CD8-positive, alpha-beta T cell (primary cell): ENCODE measurements at regions of chr1 and their contacts with region 1.

Region 1: GRCh38 chr1:89578151-89578550 is 53.5 kb downstream of the LRRC8B start:
- DNase-seq: no peak
- ATAC-seq: no peak
- H3K4me3 ChIP-seq: no peak overlapping the region
- H3K4me3 Mint-ChIP-seq: no peak overlapping the region
- H3K27ac ChIP-seq: no peak overlapping the region
- H3K27ac Mint-ChIP-seq: no peak overlapping the region
- H3K4me1 ChIP-seq: no peaks in the 10 kb centered on the region
- H3K4me1 Mint-ChIP-seq: peaks cover 7% of the 10 kb centered on the region
- H3K27me3 ChIP-seq: no peaks in the 10 kb centered on the region
- H3K27me3 Mint-ChIP-seq: no peaks in the 10 kb centered on the region
- CTCF ChIP-seq: no peak

Region 2: GRCh38 chr1:89538361-89538760 is 39.8 kb before region 1 on chr1:
- CTCF ChIA-PET with region 1: interaction called, 4 read pairs
- POLR2A ChIA-PET with region 1: no interaction called
- intact Hi-C with region 1: loop called in 1 of 2 experiments (anchors 5 kb)
- DNase-seq: no peak
- ATAC-seq: no peak
- H3K4me3 ChIP-seq: no peak overlapping the region
- H3K4me3 Mint-ChIP-seq: no peak overlapping the region
- H3K27ac ChIP-seq: no peak overlapping the region
- H3K27ac Mint-ChIP-seq: no peak overlapping the region
- H3K4me1 ChIP-seq: peaks cover 9% of the 10 kb centered on the region
- H3K4me1 Mint-ChIP-seq: peaks cover 67% of the 10 kb centered on the region
- H3K27me3 ChIP-seq: no peaks in the 10 kb centered on the region
- H3K27me3 Mint-ChIP-seq: no peaks in the 10 kb centered on the region
- CTCF ChIP-seq: no peak

Region 3: GRCh38 chr1:89563957-89564604 is 14.1 kb before region 1 on chr1:
- CTCF ChIA-PET with region 1: no interaction called
- POLR2A ChIA-PET with region 1: interaction called, 4 read pairs
- intact Hi-C with region 1: loop called in 1 of 2 experiments (anchors 2 kb)
- DNase-seq: no peak
- ATAC-seq: no peak
- H3K4me3 ChIP-seq: no peak overlapping the region
- H3K4me3 Mint-ChIP-seq: no peak overlapping the region
- H3K27ac ChIP-seq: no peak overlapping the region
- H3K27ac Mint-ChIP-seq: no peak overlapping the region
- H3K4me1 ChIP-seq: no peaks in the 10 kb centered on the region
- H3K4me1 Mint-ChIP-seq: peaks cover 40% of the 10 kb centered on the region
- H3K27me3 ChIP-seq: no peaks in the 10 kb centered on the region
- H3K27me3 Mint-ChIP-seq: no peaks in the 10 kb centered on the region
- CTCF ChIP-seq: no peak

Region 4: DNA sequence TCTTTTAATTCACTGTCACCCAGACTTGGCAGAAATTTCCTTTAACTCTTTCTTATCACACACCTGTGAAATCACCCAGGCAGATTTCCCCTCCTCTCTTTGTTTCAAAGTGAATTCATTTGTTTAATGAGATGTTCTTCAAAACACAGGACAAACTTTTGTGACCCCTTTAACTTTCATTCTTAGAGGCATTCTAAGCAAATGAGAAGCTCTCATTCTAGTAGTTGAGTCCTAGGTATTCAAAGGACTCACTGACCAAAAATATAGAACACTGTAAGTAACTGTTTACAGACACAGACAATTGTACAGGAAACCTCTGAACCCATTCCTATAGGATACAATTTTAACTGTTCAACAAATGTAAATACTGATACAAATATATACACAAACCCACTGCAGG is 71.6 kb after region 1 on chr1:
- CTCF ChIA-PET with region 1: no interaction called
- POLR2A ChIA-PET with region 1: no interaction called
- intact Hi-C with region 1: no loop called
- DNase-seq: no peak
- ATAC-seq: no peak
- H3K4me3 ChIP-seq: no peak overlapping the region
- H3K4me3 Mint-ChIP-seq: peak overlapping the region; percentile 9
- H3K27ac ChIP-seq: peak overlapping the region in 1 of 2 experiments; percentile 39
- H3K27ac Mint-ChIP-seq: peak overlapping the region; percentile 73
- H3K4me1 ChIP-seq: peaks cover 54% of the 10 kb centered on the region
- H3K4me1 Mint-ChIP-seq: peaks cover 70% of the 10 kb centered on the region
- H3K27me3 ChIP-seq: no peaks in the 10 kb centered on the region
- H3K27me3 Mint-ChIP-seq: no peaks in the 10 kb centered on the region
- CTCF ChIP-seq: no peak

Region 5: GRCh38 chr1:89771991-89772560 is 193.9 kb after region 1 on chr1:
- CTCF ChIA-PET with region 1: no interaction called
- POLR2A ChIA-PET with region 1: no interaction called
- intact Hi-C with region 1: loop called in 1 of 2 experiments (anchors 5 kb)
- DNase-seq: no peak
- ATAC-seq: no peak
- H3K4me3 ChIP-seq: no peak overlapping the region
- H3K4me3 Mint-ChIP-seq: no peak overlapping the region
- H3K27ac ChIP-seq: no peak overlapping the region
- H3K27ac Mint-ChIP-seq: no peak overlapping the region
- H3K4me1 ChIP-seq: peaks cover 8% of the 10 kb centered on the region
- H3K4me1 Mint-ChIP-seq: peaks cover 12% of the 10 kb centered on the region
- H3K27me3 ChIP-seq: no peaks in the 10 kb centered on the region
- H3K27me3 Mint-ChIP-seq: no peaks in the 10 kb centered on the region
- CTCF ChIP-seq: no peak